AG04450 (cell line): ENCODE measurements at regions of chr16 and their contacts with region 1.

Region 1: GRCh38 chr16:1705688-1706385 is at the start of gene MAPK8IP3:
- DNase-seq: peak; percentile 47
- H3K4me3 ChIP-seq: peak within 1 kb of the TSS; percentile 94
- H3K27ac ChIP-seq: peak within 1 kb of the TSS; percentile 89
- H3K27me3 ChIP-seq: no peaks in the 10 kb centered on the region
- CTCF ChIP-seq: peak; percentile 62
- polyA plus RNA-seq, gene MAPK8IP3: 11.8 and 14.7 TPM in 2 replicates

Region 2: GRCh38 chr16:1677802-1678496 is 27.9 kb before region 1 on chr16 and contains the start of gene JPT2:
- CTCF ChIA-PET with region 1: interaction called, 7 read pairs
- POLR2A ChIA-PET with region 1: interaction called, 15 read pairs
- DNase-seq: peak; percentile 88
- H3K4me3 ChIP-seq: peak within 1 kb of the TSS; percentile 87
- H3K27ac ChIP-seq: peak within 1 kb of the TSS; percentile 65
- H3K27me3 ChIP-seq: no peaks in the 10 kb centered on the region
- CTCF ChIP-seq: no peak
- polyA plus RNA-seq, gene JPT2: 39.2 and 41.2 TPM in 2 replicates

Region 3: DNA sequence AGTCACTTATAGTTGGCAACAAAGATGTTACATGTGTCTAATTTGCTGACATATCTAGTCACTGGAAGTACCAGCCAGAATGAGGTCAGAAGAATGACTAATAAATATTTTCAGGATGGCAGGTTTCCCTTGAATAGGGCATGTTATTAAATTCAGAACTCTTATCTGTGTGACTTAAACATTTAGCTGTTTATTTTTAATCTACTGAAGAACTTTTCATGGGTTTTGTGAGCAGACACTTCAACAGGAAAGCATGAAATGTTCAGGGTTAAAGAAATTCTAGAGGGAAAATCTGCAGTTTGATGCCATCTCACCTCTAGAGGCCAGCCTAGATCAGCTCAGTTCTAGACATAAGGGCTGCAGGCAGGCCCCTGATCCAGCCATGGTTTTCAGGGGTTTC is 14.6 kb before region 1 on chr16:
- CTCF ChIA-PET with region 1: interaction called, 29 read pairs
- POLR2A ChIA-PET with region 1: no interaction called
- DNase-seq: no peak
- H3K4me3 ChIP-seq: no peak overlapping the region
- H3K27ac ChIP-seq: no peak overlapping the region
- H3K27me3 ChIP-seq: no peaks in the 10 kb centered on the region
- CTCF ChIP-seq: peak; percentile 33